ENCODE measurements at regions of chr7 and their contacts with region 1.

Region 1: GRCh38 chr7:123748734-123749536 is at the start of gene WASL:
- DNase-seq: peak; percentile 82 to 93 (median 89)
- ATAC-seq: peak; percentile 92
- H3K4me3 ChIP-seq: peak within 1 kb of the TSS; percentile 86
- H3K4me3 Mint-ChIP-seq: peak within 1 kb of the TSS; percentile 91 to 99 (median 94)
- H3K27ac ChIP-seq: peak within 1 kb of the TSS; percentile 92
- H3K27ac Mint-ChIP-seq: peak within 1 kb of the TSS; percentile 85 to 97 (median 93)
- H3K4me1 ChIP-seq: peaks cover 18 to 26% of the 10 kb centered on the region in 2 donors
- H3K4me1 Mint-ChIP-seq: peaks cover 44 to 76% (median 69%) of the 10 kb centered on the region in 7 donors
- H3K27me3 ChIP-seq: no peaks in the 10 kb centered on the region
- H3K27me3 Mint-ChIP-seq: peaks cover 0 to 9% (median 0%) of the 10 kb centered on the region in 5 donors
- total RNA-seq, gene WASL: 8.3 to 15.0 (median 10.1) TPM

Region 2: DNA sequence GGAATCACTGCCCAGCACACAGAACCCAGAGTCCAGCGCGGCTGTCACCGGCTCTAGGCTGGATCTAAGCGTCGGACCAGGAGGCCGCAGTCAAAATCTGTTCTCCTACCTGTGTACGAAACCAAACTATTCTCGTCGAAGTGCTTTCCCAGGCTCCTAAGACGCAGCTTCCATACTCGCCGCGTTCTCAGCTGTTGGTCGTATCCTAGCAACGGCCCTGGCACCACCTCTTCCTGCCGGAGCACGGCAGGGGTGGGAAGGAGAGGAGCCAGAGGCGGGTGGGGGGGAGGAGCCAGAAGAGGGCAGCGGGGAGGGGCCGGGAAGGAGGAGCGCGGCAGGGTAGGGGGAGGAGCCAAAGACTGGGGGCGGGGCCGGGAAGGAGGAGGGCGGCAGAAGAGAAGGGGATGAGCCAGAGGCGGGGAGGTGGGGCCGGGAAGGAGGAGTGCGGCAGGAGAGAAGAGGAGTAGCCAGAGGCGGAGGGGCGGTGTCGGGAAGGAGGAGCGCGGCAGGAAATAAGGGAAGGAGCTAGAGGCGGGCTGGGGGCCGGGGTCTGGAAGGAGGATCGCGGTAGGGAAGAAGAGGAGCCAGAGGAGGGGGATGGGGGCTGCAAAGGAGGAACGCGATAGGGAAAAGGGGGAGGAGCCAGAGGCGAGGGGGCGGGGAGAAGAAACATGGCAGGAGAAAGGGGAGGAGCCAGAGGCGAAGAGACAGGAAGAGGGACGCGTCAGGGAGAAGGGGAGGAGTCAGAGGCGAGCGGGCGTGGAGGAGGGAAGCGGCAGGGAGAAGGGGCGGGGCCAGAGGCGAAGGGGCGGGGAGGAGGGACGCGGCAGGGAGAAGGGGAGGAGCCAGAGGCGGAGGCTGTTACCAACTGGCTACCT is 214.3 kb before region 1 on chr7 and contains the start of gene IQUB:
- CTCF ChIA-PET with region 1: no interaction called
- POLR2A ChIA-PET with region 1: interaction called, 3 read pairs
- intact Hi-C with region 1: loop called (anchors 1 kb)
- DNase-seq: peak; percentile 82 to 94 (median 88)
- ATAC-seq: peak; percentile 95
- H3K4me3 ChIP-seq: peak within 1 kb of the TSS; percentile 54
- H3K4me3 Mint-ChIP-seq: peak within 1 kb of the TSS; percentile 87 to 97 (median 91)
- H3K27ac ChIP-seq: peak within 1 kb of the TSS; percentile 73
- H3K27ac Mint-ChIP-seq: peak within 1 kb of the TSS; percentile 74 to 96 (median 86)
- H3K4me1 ChIP-seq: peaks cover 4 to 14% of the 10 kb centered on the region in 2 donors
- H3K4me1 Mint-ChIP-seq: peaks cover 7 to 31% (median 27%) of the 10 kb centered on the region in 7 donors
- H3K27me3 ChIP-seq: no peaks in the 10 kb centered on the region
- H3K27me3 Mint-ChIP-seq: peaks cover 14 to 32% (median 23%) of the 10 kb centered on the region in 5 donors
- total RNA-seq, gene IQUB: 0.24 TPM in 1 of 5 experiments, not detected in the others

Region 3: DNA sequence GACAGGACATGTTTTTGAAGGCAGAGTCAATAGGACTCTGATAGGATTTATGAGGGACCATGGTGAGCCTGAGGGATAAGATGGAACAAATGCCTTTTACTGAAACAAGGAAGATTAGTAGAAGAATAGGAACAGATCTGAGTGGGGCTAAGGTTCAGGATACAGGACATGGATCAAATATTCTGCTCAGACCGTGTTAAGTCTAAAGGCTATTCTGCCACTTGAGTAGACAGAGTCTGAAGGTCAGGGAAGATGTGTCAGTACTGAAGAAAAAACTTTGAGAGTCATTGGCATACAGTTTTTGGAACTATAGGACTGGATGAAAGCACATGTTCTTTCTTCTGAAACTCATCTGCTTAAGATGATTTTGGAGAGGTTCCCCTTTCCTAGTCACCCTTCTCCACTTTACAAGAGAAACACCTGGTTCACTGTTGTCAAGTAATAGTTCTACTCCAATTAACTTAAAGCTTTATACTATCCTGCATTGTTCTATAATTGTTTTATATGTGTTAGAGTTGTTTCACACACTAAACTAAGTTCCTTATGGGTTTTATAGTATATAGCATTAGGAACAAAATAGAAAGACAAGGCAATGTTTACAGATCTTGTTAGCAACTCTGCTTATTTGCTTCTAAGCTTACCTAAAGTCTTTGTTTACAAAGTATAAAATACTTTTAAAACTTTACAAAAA is 43.6 kb before region 1 on chr7:
- CTCF ChIA-PET with region 1: no interaction called
- POLR2A ChIA-PET with region 1: no interaction called
- intact Hi-C with region 1: loop called in 1 of 2 experiments (anchors 1 kb)
- DNase-seq: no peak
- ATAC-seq: no peak
- H3K4me3 ChIP-seq: no peak overlapping the region
- H3K4me3 Mint-ChIP-seq: no peak overlapping the region
- H3K27ac ChIP-seq: no peak overlapping the region
- H3K27ac Mint-ChIP-seq: peak overlapping the region in 6 of 9 donors; percentile 0 to 60 (median 18)
- H3K4me1 ChIP-seq: no peaks in the 10 kb centered on the region
- H3K4me1 Mint-ChIP-seq: peaks cover 0 to 8% (median 1%) of the 10 kb centered on the region in 7 donors
- H3K27me3 ChIP-seq: no peaks in the 10 kb centered on the region
- H3K27me3 Mint-ChIP-seq: no peaks in the 10 kb centered on the region

Region 4: GRCh38 chr7:123719197-123719721 is 29.7 kb before region 1 on chr7:
- CTCF ChIA-PET with region 1: interaction called, 3 read pairs
- POLR2A ChIA-PET with region 1: interaction called, 4 read pairs
- intact Hi-C with region 1: loop called (anchors 2 kb)
- DNase-seq: no peak
- ATAC-seq: no peak
- H3K4me3 ChIP-seq: no peak overlapping the region
- H3K4me3 Mint-ChIP-seq: peak overlapping the region in 8 of 10 donors; percentile 6 to 53 (median 22)
- H3K27ac ChIP-seq: no peak overlapping the region
- H3K27ac Mint-ChIP-seq: peak overlapping the region in 5 of 9 donors; percentile 13 to 58 (median 54)
- H3K4me1 ChIP-seq: peaks cover 1 to 20% of the 10 kb centered on the region in 2 donors
- H3K4me1 Mint-ChIP-seq: peaks cover 32 to 88% (median 78%) of the 10 kb centered on the region in 7 donors
- H3K27me3 ChIP-seq: no peaks in the 10 kb centered on the region
- H3K27me3 Mint-ChIP-seq: no peaks in the 10 kb centered on the region

Region 5: DNA sequence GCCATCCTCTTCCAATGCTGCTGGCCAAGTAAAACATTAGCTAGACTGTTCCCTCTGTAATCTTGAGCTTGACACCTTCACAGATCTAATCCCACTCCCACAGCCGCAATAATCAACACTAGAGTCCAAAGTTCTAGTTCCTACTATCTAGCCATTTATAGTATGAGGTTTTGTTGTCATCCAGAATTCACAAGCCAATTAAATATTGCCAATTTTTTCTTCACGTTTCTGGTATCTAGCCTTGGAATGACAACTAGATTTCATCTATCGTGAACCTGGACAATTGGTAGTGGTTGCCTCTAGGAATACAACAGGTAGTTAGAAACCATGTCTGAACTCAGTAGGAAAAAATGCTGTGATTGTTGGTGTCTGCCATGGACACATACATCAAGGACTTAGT is 10.6 kb before region 1 on chr7:
- CTCF ChIA-PET with region 1: interaction called, 3 read pairs
- POLR2A ChIA-PET with region 1: interaction called, 5 read pairs
- intact Hi-C with region 1: loop called in 1 of 2 experiments (anchors 1 kb)
- DNase-seq: no peak
- ATAC-seq: no peak
- H3K4me3 ChIP-seq: no peak overlapping the region
- H3K4me3 Mint-ChIP-seq: peak overlapping the region in 1 of 10 donors; percentile 49
- H3K27ac ChIP-seq: no peak overlapping the region
- H3K27ac Mint-ChIP-seq: no peak overlapping the region
- H3K4me1 ChIP-seq: peaks cover 0 to 6% of the 10 kb centered on the region in 2 donors
- H3K4me1 Mint-ChIP-seq: peaks cover 16 to 69% (median 57%) of the 10 kb centered on the region in 7 donors
- H3K27me3 ChIP-seq: no peaks in the 10 kb centered on the region
- H3K27me3 Mint-ChIP-seq: no peaks in the 10 kb centered on the region

Region 6: GRCh38 chr7:123865517-123866117 is 116.7 kb after region 1 on chr7:
- CTCF ChIA-PET with region 1: no interaction called
- POLR2A ChIA-PET with region 1: no interaction called
- intact Hi-C with region 1: loop called in 1 of 2 experiments (anchors 1 kb)
- DNase-seq: peak in 8 of 9 donors; percentile 22 to 60 (median 46)
- ATAC-seq: peak; percentile 81
- H3K4me3 ChIP-seq: no peak overlapping the region
- H3K4me3 Mint-ChIP-seq: no peak overlapping the region
- H3K27ac ChIP-seq: no peak overlapping the region
- H3K27ac Mint-ChIP-seq: no peak overlapping the region
- H3K4me1 ChIP-seq: no peaks in the 10 kb centered on the region
- H3K4me1 Mint-ChIP-seq: no peaks in the 10 kb centered on the region
- H3K27me3 ChIP-seq: no peaks in the 10 kb centered on the region
- H3K27me3 Mint-ChIP-seq: peaks cover 0 to 13% (median 4%) of the 10 kb centered on the region in 5 donors